Pancreas (tissue), 10 donors: ENCODE measurements at regions of chrX and their contacts with region 1.

Region 1: DNA sequence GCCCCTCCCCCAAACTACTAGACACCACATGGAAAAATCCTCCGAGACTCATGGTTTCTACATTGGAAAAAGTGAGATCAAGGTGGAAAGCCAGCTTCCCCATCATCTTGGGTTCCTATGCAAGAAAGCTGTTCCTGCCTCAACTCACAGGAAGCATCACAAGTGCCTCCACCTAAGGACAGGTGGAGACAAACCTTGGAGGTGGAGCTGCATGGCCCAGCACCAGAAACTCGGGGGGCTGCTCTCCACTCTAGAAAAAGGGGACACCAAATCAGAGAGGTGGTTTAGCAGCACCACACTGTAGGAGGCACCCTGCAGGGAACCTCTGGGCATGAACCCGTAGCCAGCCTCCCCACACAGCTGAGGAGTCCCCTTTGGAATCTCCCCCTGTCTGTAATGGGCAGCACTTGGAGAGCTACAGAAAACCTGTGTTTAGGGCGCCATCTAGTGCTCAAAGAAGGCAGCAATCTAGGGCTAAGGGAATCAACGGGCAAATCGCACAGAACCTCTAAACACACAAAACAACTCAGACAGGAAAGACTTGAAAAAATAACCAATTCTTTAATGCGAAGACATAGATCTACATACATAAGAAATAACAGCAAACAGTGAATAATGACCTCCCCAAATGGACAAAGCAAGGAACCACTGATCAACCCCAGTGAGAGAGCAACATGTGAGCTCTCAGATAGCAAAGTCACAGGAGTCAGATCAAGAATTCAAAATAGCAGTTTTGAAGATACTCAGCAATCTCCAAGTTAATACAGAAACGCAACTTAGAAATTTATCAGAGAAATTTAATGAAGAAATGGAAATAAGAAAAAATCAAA is 37.0 kb upstream of the ZBTB33 start:
- DNase-seq: peak in 4 of 6 donors; percentile 11 to 65 (median 42)
- ATAC-seq: peak; percentile 40 to 85 (median 84)
- H3K4me3 ChIP-seq: no peak overlapping the region
- H3K27ac ChIP-seq: no peak overlapping the region
- H3K4me1 ChIP-seq: no peaks in the 10 kb centered on the region
- H3K27me3 ChIP-seq: peaks cover 0 to 9% (median 0%) of the 10 kb centered on the region in 4 donors
- CTCF ChIP-seq: peak; percentile 65 to 79 (median 74)

Region 2: DNA sequence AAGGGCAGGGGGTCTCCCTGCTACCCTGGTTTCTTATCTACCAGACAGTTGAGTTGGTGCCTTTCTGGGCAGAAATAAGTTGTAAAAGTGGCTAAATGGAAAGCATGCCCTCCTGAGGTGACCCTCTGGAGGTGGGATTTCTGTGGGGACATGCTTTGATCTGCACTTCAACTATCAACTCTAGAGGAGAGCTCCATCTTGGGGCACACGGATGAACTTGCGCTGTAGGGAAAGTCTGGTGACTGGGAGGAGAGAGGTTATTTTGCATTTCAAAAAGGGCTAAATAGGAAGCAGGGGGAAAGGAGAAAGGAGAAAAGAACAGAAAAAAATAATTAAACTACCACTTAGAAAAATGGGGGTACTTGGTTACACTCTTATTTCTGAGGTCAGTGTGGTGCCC is 123.4 kb before region 1 on chrX:
- intact Hi-C with region 1: loop called in 1 of 3 experiments (anchors 10 kb)
- DNase-seq: no peak
- ATAC-seq: no peak
- H3K4me3 ChIP-seq: no peak overlapping the region
- H3K27ac ChIP-seq: no peak overlapping the region
- H3K4me1 ChIP-seq: no peaks in the 10 kb centered on the region
- H3K27me3 ChIP-seq: no peaks in the 10 kb centered on the region
- CTCF ChIP-seq: no peak

Region 3: GRCh38 chrX:120109378-120109777 is 104.3 kb before region 1 on chrX:
- intact Hi-C with region 1: loop called in 1 of 3 experiments (anchors 10 kb)
- DNase-seq: no peak
- ATAC-seq: no peak
- H3K4me3 ChIP-seq: no peak overlapping the region
- H3K27ac ChIP-seq: no peak overlapping the region
- H3K4me1 ChIP-seq: no peaks in the 10 kb centered on the region
- H3K27me3 ChIP-seq: no peaks in the 10 kb centered on the region
- CTCF ChIP-seq: no peak